Heart right ventricle (tissue), 16 donors: ENCODE measurements at regions of chr4 and their contacts with region 1.

Region 1: GRCh38 chr4:15479089-15479912 is 9.6 kb downstream of the CC2D2A start:
- DNase-seq: peak in 1 of 2 donors; percentile 43
- ATAC-seq: peak; percentile 72 to 90 (median 82)
- H3K4me3 ChIP-seq: peak overlapping the region in 9 of 10 donors; percentile 20 to 51 (median 42)
- H3K27ac ChIP-seq: peak overlapping the region in 9 of 10 donors; percentile 57 to 78 (median 68)
- H3K4me1 ChIP-seq: peaks cover 0 to 28% (median 0%) of the 10 kb centered on the region in 9 donors
- H3K27me3 ChIP-seq: no peaks in the 10 kb centered on the region
- CTCF ChIP-seq: peak; percentile 24 to 78 (median 66)

Region 2: DNA sequence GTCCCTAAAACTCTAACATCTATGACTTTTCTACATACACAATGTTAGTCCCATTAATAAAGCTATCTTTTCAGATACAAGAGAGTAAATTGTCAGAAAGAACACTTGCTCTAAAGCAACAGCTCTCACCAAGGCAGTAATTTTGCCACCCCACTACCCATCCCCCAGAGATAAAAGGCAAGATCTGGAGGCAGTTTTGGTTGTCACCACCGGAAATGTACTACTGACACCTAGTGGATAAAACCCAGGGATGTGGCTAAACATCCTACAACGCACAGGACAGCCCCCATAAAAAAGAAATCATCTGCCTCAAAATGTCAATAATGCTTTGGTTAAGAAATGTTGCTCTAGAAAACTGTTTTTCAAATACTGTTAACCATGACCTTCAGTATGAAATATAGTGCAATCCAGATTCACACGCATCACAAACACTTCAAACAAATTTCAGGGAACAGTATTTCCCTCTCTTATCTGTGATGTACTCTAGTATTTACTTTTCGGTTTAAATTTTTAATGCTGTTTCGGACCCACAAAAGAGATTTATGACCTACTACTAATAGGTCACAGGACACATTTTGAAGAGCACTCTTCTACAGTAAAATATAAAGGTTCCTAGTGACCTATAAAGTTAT is 170.7 kb after region 1 on chr4:
- intact Hi-C with region 1: loop called in 8 of 10 experiments (anchors 5 to 10 kb)
- DNase-seq: peak in 1 of 2 donors; percentile 51
- ATAC-seq: peak in 7 of 8 donors; percentile 40 to 73 (median 64)
- H3K4me3 ChIP-seq: no peak overlapping the region
- H3K27ac ChIP-seq: peak overlapping the region in 5 of 10 donors; percentile 0 to 100 (median 14)
- H3K4me1 ChIP-seq: peaks cover 4 to 88% (median 75%) of the 10 kb centered on the region in 9 donors
- H3K27me3 ChIP-seq: no peaks in the 10 kb centered on the region
- CTCF ChIP-seq: peak; percentile 26 to 79 (median 64)

Region 3: DNA sequence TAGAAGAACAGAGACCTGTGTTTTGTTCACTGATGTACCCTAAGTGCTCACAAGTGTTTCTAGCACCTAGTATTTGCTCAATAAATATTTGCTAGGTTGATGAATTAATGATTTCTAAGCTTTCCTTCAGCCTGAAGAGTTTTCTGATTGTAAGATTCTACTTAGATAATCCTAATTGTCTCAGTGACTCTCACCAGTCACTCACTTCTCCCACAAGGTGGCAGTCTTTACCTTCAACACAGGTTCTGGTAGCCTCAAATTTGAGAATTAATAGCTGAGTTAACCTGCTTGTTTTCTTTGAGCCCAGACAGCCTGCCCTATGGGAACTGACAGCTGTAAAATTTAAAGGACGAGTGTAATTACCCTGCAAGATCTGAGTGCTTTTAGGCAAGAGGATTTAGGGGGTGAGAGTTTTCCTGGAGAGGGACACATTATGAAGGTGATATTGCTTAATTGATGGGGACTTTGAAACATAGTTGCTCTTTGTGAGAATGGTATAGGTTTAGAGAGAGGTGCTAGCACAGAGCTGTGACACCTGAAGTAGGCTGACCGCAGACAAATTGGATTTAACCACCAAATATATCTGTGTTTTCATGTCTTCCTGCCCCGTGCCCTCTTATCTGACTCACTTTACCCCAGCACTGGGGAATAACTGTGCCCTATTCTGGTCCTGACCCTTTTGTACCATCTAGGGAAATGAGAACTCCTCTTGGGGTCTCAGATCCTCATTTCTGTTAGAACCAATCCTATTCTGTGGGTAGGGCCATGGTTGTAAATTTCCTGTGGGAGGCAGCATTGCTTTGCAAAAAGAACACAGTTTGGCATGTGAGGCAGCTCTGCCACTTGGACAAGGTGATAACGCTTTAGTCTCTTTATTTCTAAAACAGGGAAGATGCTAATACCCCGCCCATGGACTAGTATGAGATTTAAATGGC is 326.5 kb after region 1 on chr4:
- intact Hi-C with region 1: loop called in 1 of 10 experiments (anchors 5 kb)
- DNase-seq: peak in 1 of 2 donors; percentile 30
- ATAC-seq: peak in 7 of 8 donors; percentile 15 to 78 (median 67)
- H3K4me3 ChIP-seq: no peak overlapping the region
- H3K27ac ChIP-seq: no peak overlapping the region
- H3K4me1 ChIP-seq: peaks cover 0 to 29% (median 3%) of the 10 kb centered on the region in 9 donors
- H3K27me3 ChIP-seq: no peaks in the 10 kb centered on the region
- CTCF ChIP-seq: peak; percentile 47 to 78 (median 72)

Region 4: DNA sequence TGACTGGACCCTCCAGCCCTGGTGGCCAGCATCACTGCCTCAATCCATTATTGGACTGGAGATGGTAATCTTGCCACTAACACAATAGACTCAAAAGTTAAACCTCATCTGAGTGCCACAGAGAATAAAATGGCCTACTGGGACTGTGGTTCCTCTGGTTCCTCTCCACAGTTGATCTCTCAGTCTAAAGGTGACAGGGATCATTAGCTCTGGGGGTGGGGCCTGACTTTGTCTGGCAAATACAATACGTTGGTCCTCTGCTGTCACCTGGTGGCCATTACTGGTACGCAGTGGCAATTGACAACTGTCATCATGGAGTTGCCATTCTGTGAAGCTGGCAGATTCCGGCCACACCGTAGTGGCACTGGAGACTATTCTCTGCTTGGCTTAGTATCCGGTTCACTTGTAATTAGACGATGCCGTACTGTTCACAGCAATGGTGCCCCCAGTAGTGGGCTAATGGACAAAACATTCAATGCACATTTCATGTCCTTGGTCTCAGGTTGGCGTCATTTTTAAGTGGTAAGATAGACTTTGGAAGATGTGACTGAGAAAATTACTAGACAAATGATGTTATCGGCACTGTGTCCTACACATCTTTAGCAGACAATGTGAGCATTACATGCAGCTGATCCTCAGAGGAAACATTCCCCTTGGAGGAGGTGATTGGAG is 477.0 kb after region 1 on chr4:
- intact Hi-C with region 1: loop called in 5 of 10 experiments (anchors 5 kb)
- DNase-seq: peak; percentile 66 to 78
- ATAC-seq: peak; percentile 63 to 93 (median 78)
- H3K4me3 ChIP-seq: no peak overlapping the region
- H3K27ac ChIP-seq: no peak overlapping the region
- H3K4me1 ChIP-seq: peaks cover 0 to 5% (median 0%) of the 10 kb centered on the region in 9 donors
- H3K27me3 ChIP-seq: no peaks in the 10 kb centered on the region
- CTCF ChIP-seq: peak; percentile 75 to 94 (median 87)

Region 5: GRCh38 chr4:16001484-16001858 is 522.2 kb after region 1 on chr4:
- intact Hi-C with region 1: loop called in 1 of 10 experiments (anchors 10 kb)
- DNase-seq: peak in 1 of 2 donors; percentile 55
- ATAC-seq: peak; percentile 84 to 95 (median 94)
- H3K4me3 ChIP-seq: no peak overlapping the region
- H3K27ac ChIP-seq: no peak overlapping the region
- H3K4me1 ChIP-seq: peaks cover 0 to 13% (median 4%) of the 10 kb centered on the region in 9 donors
- H3K27me3 ChIP-seq: no peaks in the 10 kb centered on the region
- CTCF ChIP-seq: peak; percentile 72 to 88 (median 85)